ENCODE measurements at regions of chr3 and their contacts with region 1.

Region 1: GRCh38 chr3:94249585-94249984 is 186.7 kb downstream of the NSUN3 start:
- DNase-seq: peak; percentile 57
- H3K4me3 ChIP-seq: no peak overlapping the region
- H3K27ac ChIP-seq: no peak overlapping the region
- H3K4me1 ChIP-seq: no peaks in the 10 kb centered on the region
- H3K27me3 ChIP-seq: no peaks in the 10 kb centered on the region
- CTCF ChIP-seq: peak; percentile 74 to 83
- POLR2A ChIP-seq: no peak

Region 2: DNA sequence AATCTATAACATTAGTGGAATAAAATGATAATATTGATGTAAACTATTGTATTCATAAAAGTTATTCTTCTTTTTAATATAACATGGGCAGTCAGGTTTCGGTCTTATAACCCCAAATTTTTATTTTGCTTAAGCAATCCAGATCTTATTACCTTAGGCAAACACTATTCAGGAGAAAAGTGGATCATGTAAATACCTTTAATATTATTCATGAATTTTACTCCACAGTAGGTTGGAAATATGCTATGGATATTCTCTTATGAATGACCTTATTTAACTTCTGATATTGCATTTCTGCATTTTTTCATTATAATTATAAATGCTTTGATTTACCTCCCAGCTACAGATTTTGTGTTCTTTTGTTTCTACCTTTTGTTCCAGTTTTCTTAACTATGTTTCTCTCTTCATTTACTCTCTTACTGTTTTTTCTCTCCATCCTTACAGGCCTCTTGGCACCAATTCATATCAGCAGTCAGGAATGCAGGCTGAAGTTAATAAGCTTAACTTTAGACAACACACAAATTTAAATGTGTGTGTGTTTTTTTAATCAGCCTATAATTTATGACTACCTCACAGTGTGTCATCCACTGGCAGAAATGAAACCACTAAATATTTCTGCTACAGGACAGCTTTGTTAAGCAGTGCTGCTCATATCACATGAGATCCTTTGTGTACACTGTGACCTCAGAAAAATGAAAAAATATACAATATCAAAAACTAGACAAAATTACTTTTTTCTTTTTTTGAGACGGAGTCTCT is 75.7 kb before region 1 on chr3:
- CTCF ChIA-PET with region 1: no interaction called
- POLR2A ChIA-PET with region 1: no interaction called
- dilution Hi-C with region 1: no loop called
- intact Hi-C with region 1: no loop called
- DNase-seq: no peak
- H3K4me3 ChIP-seq: no peak overlapping the region
- H3K27ac ChIP-seq: no peak overlapping the region
- H3K4me1 ChIP-seq: no peaks in the 10 kb centered on the region
- H3K27me3 ChIP-seq: no peaks in the 10 kb centered on the region
- CTCF ChIP-seq: no peak
- POLR2A ChIP-seq: no peak

Region 3: GRCh38 chr3:94269763-94270162 is 20.2 kb after region 1 on chr3:
- CTCF ChIA-PET with region 1: interaction called, 10 read pairs
- POLR2A ChIA-PET with region 1: no interaction called
- dilution Hi-C with region 1: no loop called
- intact Hi-C with region 1: no loop called
- DNase-seq: no peak
- H3K4me3 ChIP-seq: no peak overlapping the region
- H3K27ac ChIP-seq: no peak overlapping the region
- H3K4me1 ChIP-seq: no peaks in the 10 kb centered on the region
- H3K27me3 ChIP-seq: no peaks in the 10 kb centered on the region
- CTCF ChIP-seq: no peak
- POLR2A ChIP-seq: no peak

Region 4: DNA sequence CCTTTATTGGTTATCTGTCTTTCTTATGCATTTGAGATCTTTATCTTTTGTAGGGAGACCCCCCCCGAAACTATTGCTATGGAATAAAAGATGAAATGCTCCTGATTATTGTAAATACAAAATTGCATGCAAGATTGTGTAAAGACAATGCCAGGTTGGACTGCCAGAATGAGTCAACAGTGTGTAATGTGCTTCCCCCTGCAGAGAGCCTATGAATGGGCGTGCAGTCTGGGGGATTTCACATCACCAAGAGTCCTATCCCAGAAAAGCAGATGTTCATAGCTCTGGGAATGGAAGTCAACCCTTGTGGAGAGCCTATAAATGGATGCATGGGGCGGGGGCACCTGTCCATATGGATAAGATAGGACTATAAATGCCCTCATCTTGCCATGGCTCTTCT is 397.5 kb after region 1 on chr3:
- CTCF ChIA-PET with region 1: no interaction called
- POLR2A ChIA-PET with region 1: no interaction called
- dilution Hi-C with region 1: no loop called
- intact Hi-C with region 1: no loop called
- DNase-seq: no peak
- H3K4me3 ChIP-seq: no peak overlapping the region
- H3K27ac ChIP-seq: no peak overlapping the region
- H3K4me1 ChIP-seq: no peaks in the 10 kb centered on the region
- H3K27me3 ChIP-seq: no peaks in the 10 kb centered on the region
- CTCF ChIP-seq: no peak
- POLR2A ChIP-seq: no peak